ENCODE measurements at regions of chr6 and their contacts with region 1.

Region 1: GRCh38 chr6:113858480-113859348 is 1.6 kb downstream of the MARCKS start:
- DNase-seq: peak; percentile 94
- ATAC-seq: peak; percentile 96
- H3K4me3 Mint-ChIP-seq: peak overlapping the region; percentile 45
- H3K27ac Mint-ChIP-seq: no peak overlapping the region
- H3K4me1 Mint-ChIP-seq: peaks cover 16% of the 10 kb centered on the region
- H3K27me3 Mint-ChIP-seq: peaks cover 33% of the 10 kb centered on the region
- CTCF ChIP-seq: peak; percentile 95

Region 2: DNA sequence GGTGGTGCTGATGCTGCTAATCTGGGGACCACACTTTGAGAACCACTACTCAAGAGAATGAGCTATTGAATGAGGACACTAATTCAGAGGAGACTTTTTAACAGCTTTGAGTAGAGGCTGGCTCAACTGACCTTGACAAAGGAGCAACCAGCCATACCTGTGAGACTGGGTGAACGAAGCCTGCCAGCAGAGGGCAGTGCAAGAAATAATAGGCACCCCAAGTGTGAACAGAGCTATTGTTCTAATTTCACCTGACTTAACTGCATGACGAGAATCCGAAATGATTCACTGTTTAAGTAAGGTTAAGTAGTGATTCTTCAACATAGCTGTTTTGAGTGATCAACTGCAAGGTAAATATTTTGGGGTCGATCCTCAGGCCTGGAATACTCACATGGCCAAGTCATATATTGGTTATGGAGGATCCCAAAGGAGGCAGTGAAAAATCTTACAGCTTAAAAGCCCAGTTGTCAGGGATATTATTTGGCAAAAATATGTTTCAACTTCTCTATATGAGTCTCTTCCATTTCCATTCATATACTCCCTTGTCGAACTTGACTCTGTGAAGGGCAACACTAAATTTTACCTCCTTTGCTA is 552.1 kb before region 1 on chr6:
- CTCF ChIA-PET with region 1: interaction called, 18 read pairs
- POLR2A ChIA-PET with region 1: no interaction called
- intact Hi-C with region 1: loop called (anchors 2 kb)
- DNase-seq: peak; percentile 74
- ATAC-seq: peak; percentile 64
- H3K4me3 Mint-ChIP-seq: no peak overlapping the region
- H3K27ac Mint-ChIP-seq: no peak overlapping the region
- H3K4me1 Mint-ChIP-seq: no peaks in the 10 kb centered on the region
- H3K27me3 Mint-ChIP-seq: no peaks in the 10 kb centered on the region
- CTCF ChIP-seq: peak; percentile 47

Region 3: GRCh38 chr6:113632220-113632864 is 226.4 kb before region 1 on chr6:
- CTCF ChIA-PET with region 1: interaction called, 7 read pairs
- POLR2A ChIA-PET with region 1: no interaction called
- intact Hi-C with region 1: loop called (anchors 5 kb)
- DNase-seq: peak; percentile 66
- ATAC-seq: peak; percentile 71
- H3K4me3 Mint-ChIP-seq: peak overlapping the region; percentile 29
- H3K27ac Mint-ChIP-seq: peak overlapping the region; percentile 74
- H3K4me1 Mint-ChIP-seq: peaks cover 31% of the 10 kb centered on the region
- H3K27me3 Mint-ChIP-seq: peaks cover 10% of the 10 kb centered on the region
- CTCF ChIP-seq: no peak

Region 4: DNA sequence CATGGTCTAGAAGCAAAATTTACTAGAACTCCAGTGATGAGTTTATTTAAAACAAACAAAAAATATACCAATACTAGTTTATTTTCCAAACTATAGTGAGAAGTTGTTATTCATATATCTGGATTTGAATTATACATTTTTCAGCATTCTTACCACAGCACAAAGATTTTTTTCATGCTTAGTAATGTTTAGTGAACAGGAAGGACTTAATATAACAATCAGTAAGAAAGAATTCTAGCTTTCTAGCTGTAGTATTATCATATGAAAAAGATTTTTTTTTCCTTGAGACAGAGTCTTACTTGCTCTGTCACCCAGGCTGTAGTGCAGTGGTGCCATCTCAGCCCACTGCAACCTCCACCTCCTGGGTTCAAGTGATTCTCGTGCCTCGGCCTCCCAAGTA is 12.2 kb after region 1 on chr6:
- CTCF ChIA-PET with region 1: interaction called, 10 read pairs
- POLR2A ChIA-PET with region 1: no interaction called
- intact Hi-C with region 1: no loop called
- DNase-seq: no peak
- ATAC-seq: no peak
- H3K4me3 Mint-ChIP-seq: no peak overlapping the region
- H3K27ac Mint-ChIP-seq: no peak overlapping the region
- H3K4me1 Mint-ChIP-seq: peaks cover 7% of the 10 kb centered on the region
- H3K27me3 Mint-ChIP-seq: peaks cover 34% of the 10 kb centered on the region
- CTCF ChIP-seq: no peak

Region 5: DNA sequence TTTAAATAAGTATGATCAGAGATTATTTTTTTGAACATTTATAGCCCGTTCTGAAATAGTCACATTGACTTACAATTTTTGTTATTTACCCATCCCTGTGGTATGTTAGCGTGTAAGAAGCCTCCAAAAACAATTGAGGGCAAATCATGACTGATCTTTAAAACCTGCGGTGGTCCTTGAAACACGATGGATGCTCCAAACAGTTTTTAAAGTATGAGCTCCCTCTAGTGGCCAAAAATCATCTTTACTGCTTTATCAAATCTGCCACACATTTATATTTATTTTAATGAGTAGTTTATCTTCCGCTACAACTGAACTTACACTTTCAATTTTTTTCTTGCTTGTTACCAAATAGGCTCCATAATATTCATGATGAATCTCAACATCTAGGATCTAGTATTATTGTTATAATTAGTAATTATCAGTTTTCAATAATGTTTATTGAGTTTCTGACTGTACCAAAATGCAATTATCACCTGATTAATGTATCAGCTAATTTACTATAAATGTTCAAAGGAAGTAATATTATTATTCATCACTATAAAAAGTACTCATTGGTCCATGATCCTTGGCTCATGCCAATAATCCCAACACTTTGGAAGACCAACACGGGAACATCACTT is 50.6 kb after region 1 on chr6:
- CTCF ChIA-PET with region 1: interaction called, 11 read pairs
- POLR2A ChIA-PET with region 1: interaction called, 3 read pairs
- intact Hi-C with region 1: no loop called
- DNase-seq: peak; percentile 8
- ATAC-seq: peak; percentile 64
- H3K4me3 Mint-ChIP-seq: no peak overlapping the region
- H3K27ac Mint-ChIP-seq: no peak overlapping the region
- H3K4me1 Mint-ChIP-seq: no peaks in the 10 kb centered on the region
- H3K27me3 Mint-ChIP-seq: peaks cover 9% of the 10 kb centered on the region
- CTCF ChIP-seq: peak; percentile 74